Testis (tissue), 5 donors: ENCODE measurements at regions of chr1 and their contacts with region 1.

Region 1: DNA sequence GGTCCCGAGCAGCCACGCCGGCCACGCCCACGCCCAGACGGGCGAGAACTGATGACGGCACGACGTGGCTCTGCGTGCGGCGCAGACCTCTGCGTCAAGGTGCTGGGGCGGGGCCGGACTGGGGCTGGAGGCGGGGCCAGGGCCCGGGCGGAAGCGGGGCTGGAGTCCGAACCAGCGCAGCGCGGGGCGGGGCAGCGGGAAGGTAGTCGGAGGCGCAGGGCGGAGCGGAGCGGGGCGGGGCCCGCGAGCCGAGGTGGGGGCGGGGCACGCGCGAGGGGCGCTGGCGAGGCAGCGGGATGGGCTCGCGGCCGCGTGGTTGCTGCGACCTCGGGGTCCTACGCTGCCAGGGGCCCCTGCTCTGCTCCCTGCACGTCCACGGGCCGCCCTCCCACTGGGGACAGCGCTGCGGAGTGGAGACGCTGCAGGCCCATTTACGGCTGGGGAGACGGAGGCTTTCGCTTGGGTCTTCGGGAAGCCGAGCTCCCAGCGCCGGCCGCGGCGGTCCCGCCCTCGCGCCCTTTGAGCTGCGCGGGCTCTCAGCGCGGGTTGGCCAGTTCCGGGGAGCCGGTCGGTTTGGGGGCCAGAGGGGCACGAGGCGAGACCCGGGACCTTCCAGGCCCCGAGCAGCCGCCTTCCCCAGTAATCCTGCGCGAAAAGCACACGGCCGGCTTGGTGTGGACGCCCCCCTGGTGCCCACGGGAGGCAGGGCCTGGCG is at the start of gene PEX10:
- DNase-seq: peak; percentile 98
- H3K4me3 ChIP-seq: peak within 1 kb of the TSS; percentile 74 to 88
- H3K27ac ChIP-seq: peak within 1 kb of the TSS; percentile 45 to 81
- H3K4me1 ChIP-seq: peaks cover 21% of the 10 kb centered on the region
- H3K27me3 ChIP-seq: no peaks in the 10 kb centered on the region
- CTCF ChIP-seq: peak in 1 of 3 experiments; percentile 19
- POLR2A ChIP-seq: no peak
- total RNA-seq, gene PEX10: 50.4 to 52.8 TPM

Region 2: DNA sequence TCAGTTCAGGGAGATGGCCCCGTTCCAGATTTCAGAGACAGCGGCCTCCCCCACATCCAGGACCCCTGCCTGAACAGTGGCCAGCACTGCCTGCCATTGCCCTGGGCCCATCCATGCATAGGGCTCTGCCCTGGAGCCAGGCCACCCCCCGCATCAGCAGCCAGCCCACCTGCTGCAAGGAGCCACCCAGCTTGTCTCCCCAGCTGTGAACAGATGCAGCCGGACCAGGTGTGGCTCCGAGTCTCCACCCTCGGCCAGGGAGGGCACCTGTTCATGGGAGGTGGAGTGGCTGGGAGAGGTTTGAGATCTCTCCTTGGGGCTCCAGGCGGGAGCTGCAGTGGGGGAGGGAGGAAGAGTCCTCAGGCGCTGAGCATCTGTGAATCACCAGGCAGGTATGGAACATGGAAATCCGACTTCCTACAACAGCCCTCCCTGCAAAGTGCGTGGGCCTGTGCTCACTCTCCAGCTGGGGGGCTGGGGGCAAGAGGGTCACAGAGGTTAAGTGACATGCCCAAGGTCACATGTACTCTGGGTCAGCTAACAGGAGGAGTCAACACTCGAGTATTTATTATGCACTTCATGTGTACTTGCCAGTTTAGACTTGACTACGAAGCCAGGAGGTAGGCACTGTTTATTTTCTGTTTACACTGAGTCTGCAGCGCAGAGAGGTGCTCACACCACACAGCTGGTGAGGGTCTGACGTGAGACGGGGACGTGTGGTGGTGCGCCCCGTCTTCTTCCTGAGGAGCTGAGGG is 122.2 kb after region 1 on chr1:
- intact Hi-C with region 1: loop called (anchors 5 kb)
- DNase-seq: no peak
- H3K4me3 ChIP-seq: no peak overlapping the region
- H3K27ac ChIP-seq: no peak overlapping the region
- H3K4me1 ChIP-seq: peaks cover 10% of the 10 kb centered on the region
- H3K27me3 ChIP-seq: no peaks in the 10 kb centered on the region
- CTCF ChIP-seq: no peak
- POLR2A ChIP-seq: no peak

Region 3: DNA sequence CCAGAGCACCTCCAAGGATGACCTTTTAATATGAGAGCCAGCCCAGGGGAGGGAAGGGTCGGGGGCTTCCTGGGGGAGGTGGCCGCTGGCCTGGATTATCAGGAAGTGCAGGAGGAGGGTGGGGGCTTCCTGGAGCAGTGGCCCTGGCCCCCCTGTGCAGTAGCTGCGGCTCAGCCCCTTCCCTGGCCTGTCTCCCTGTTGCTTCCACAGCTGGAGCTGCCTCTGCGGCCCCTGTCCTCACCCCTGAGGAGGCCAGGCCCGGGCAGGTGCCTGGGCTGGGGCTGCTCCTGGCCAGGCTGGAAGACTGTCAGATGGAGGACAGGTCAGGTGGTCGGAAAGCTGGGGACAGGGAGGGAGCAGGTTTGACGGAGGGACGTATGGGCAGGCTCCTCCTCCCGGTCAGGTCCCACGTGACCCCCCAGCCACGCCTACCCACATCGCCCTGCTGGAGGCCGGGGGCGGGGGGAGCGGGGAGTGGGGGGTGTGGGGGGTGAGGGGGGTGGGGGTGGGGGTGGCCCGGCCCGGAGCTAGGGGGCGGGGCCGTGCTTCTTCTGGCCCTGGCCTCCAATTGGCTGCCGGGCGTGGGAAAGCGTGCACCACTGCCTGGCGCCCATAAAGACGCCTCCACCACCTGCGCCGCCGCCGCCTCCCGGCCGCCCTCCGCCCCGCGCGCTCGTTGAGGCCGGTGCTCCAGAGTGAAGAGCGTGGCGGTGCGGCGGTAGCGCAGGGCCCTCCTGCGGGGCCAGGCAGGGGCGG is 133.3 kb after region 1 on chr1:
- intact Hi-C with region 1: loop called (anchors 5 kb)
- DNase-seq: peak; percentile 90
- H3K4me3 ChIP-seq: peak overlapping the region; percentile 50 to 61
- H3K27ac ChIP-seq: peak overlapping the region; percentile 68 to 95
- H3K4me1 ChIP-seq: peaks cover 56% of the 10 kb centered on the region
- H3K27me3 ChIP-seq: no peaks in the 10 kb centered on the region
- CTCF ChIP-seq: no peak
- POLR2A ChIP-seq: no peak

Region 4: DNA sequence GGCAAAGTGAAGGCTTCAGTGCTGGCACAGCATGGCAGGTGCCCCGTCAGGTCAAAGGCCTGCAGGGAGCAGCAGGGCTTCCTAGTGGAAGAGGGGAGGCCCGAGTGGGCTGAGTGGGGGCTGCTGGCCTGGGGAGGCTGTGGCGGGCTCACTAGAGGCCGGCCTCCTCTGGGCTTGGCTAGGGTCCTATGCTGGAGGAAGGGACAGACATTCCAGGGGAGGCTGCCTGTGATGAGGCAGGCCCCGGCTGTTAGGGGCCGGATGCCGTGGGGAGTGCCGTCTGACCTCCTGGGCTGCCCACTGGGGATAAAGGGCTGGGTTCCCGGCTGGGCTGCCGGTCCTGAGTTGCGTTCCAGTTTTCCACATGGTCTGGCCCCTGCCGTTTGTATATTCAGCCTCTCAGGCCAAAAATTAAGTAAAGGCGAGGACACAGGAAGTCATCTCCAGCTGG is 195.0 kb after region 1 on chr1:
- intact Hi-C with region 1: no loop called
- DNase-seq: peak; percentile 69
- H3K4me3 ChIP-seq: no peak overlapping the region
- H3K27ac ChIP-seq: no peak overlapping the region
- H3K4me1 ChIP-seq: peaks cover 11% of the 10 kb centered on the region
- H3K27me3 ChIP-seq: no peaks in the 10 kb centered on the region
- CTCF ChIP-seq: no peak
- POLR2A ChIP-seq: no peak